GM10248 (cell line): ENCODE measurements at regions of chr12 and their contacts with region 1.

Region 1: GRCh38 chr12:6927379-6928024 is at the start of gene ATN1:
- DNase-seq: peak; percentile 71
- CTCF ChIP-seq: no peak

Region 2: DNA sequence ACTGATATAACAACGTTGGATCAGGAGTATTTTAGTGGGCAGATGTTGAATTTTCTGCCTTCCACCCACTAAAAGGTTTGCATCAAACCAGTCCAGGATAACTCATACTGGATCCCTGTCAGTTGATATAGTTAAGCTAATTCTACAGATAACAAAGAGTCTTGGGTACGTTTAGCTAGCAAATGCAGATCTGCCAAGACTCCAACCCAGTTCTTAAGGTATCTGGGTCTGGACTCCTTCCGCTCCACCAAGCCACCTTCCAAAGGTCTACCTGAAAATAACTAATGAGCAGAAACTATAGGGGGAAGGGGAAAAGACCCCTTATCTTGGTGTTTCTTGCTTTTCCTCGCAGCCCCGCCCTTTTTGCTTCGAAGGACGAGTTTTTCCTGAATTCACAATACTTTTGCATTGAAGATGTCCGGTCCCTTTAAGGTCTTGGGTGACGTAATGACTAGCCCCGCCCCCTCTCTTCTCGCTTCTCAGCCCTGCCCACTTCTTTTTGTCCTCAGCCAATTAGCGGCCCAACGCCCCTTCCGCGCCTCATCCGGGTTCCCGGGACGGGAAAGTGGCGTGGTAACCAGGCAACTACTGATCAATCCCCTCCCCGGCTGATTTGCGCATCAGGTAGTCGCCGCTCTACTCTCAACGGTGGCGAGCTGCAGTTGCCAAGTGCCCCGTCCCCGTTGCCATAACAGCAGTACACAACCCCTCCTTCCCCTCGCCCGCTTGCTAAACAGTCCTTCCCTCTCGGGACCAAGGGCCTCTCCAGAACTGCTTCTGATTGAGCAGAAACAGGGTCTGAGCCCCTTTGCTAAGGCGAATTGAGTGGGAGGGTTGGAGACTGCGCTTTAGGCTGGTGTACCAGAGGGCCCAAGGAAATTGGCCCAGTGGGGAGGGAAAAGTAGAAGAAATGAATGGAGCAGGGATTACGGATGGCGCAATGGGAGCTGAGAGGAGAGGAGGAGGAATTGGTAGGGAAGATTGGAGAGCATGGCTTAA is 22.9 kb before region 1 on chr12 and contains the start of gene LRRC23:
- CTCF ChIA-PET with region 1: interaction called, 35 read pairs
- POLR2A ChIA-PET with region 1: no interaction called
- DNase-seq: peak; percentile 95
- CTCF ChIP-seq: no peak

Region 3: DNA sequence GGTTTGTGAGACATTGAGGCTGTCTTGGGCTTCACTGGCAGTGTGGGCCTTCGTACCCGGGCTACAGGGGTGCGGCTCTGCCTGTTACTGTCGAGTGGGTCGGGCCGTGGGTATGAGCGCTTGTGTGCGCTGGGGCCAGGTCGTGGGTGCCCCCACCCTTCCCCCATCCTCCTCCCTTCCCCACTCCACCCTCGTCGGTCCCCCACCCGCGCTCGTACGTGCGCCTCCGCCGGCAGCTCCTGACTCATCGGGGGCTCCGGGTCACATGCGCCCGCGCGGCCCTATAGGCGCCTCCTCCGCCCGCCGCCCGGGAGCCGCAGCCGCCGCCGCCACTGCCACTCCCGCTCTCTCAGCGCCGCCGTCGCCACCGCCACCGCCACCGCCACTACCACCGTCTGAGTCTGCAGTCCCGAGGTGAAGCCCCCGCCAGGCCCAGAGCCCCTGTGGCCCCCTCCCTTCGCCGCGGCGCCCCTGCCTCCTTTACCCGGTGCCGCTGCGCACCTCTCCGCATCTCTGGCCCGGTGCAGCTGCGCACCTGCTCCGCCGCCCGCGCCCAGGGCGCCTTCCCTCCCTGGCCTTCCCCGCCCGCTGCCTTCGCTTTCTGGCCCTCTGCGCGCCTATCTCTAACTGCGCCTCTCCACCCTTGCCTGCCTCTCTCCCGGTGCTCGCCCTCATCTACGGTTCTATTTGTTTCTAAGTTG is 13.1 kb before region 1 on chr12 and contains the start of gene ENO2:
- CTCF ChIA-PET with region 1: interaction called, 45 read pairs
- POLR2A ChIA-PET with region 1: no interaction called
- DNase-seq: peak; percentile 89
- CTCF ChIP-seq: no peak

Region 4: GRCh38 chr12:6937481-6938297 is 10.2 kb after region 1 on chr12:
- CTCF ChIA-PET with region 1: interaction called, 142 read pairs
- POLR2A ChIA-PET with region 1: interaction called, 6 read pairs
- DNase-seq: peak; percentile 87
- CTCF ChIP-seq: peak; percentile 98

Region 5: DNA sequence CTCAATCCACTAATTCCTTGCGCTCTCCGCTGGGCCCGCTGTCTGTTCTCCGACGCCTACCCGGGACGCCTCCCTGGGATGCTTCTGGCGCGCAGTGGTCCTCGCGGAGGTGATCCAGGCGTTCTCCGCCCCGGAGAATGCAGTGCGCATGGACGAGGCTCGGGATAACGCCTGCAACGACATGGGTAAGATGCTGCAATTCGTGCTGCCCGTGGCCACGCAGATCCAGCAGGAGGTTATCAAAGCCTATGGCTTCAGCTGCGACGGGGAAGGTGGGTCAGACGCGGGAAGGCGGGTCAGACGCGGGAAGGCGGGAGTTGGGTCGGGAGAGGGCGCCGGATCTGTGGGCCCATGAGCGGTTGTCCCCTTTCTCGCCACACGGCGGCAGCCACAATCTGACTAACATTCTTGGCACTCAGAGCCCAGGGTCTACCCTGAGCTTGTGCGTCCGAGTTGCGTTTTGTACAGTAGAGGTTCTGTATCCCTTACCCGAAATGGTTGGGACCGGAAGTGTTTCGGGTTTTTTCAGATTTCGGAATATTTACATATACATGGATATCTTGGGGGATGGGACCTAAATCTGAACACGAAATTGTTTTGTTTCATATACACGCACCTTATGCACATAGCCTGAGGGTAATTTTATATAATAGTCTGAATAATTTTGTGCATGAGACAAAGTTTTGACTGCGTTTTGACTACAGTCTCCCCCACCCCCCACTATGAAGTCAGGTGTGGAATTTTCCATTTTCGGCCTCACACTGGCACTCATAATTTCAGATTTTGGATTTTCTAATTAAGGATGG is 17.1 kb after region 1 on chr12:
- CTCF ChIA-PET with region 1: interaction called, 142 read pairs
- POLR2A ChIA-PET with region 1: interaction called, 10 read pairs
- DNase-seq: peak; percentile 79
- CTCF ChIP-seq: peak; percentile 94

Region 6: GRCh38 chr12:6953442-6954315 is 26.2 kb after region 1 on chr12:
- CTCF ChIA-PET with region 1: interaction called, 530 read pairs
- POLR2A ChIA-PET with region 1: no interaction called
- DNase-seq: peak; percentile 80
- CTCF ChIP-seq: no peak

Region 7: DNA sequence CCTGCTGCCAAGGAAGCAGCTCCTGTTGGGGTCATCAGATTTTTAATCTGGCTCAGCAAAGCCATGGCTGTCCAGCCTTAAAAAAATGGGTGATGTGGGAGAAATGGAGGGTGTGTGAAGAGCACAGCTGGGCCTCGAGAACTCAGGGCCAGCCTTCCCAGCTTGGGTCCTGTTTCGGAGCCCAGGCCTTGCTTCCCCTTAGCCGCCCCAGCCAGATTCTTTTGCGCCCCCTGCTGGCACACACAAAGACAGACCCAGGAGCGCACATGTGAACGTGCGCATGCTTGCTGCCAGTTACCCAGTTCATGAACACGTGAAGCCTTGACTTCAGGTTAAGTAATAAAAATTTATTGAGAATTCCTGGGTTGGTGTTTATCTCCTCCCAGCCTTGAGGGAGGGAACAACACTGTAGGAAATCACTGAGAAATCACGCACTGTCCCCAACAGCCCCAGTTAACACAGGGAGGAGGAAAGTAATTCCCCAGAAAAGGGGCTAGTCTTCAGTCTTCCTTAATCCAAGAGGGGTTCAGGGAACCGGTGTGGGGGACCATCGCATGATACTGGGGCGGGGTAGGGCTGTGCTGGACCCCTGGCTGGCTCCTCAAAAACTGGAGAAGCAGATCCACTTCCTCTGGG is 37.6 kb after region 1 on chr12:
- CTCF ChIA-PET with region 1: interaction called, 530 read pairs
- POLR2A ChIA-PET with region 1: no interaction called
- DNase-seq: peak; percentile 84
- CTCF ChIP-seq: peak; percentile 98

Region 8: GRCh38 chr12:7005311-7005710 is 77.8 kb after region 1 on chr12:
- CTCF ChIA-PET with region 1: no interaction called
- POLR2A ChIA-PET with region 1: no interaction called
- DNase-seq: no peak
- CTCF ChIP-seq: no peak

Region 9: DNA sequence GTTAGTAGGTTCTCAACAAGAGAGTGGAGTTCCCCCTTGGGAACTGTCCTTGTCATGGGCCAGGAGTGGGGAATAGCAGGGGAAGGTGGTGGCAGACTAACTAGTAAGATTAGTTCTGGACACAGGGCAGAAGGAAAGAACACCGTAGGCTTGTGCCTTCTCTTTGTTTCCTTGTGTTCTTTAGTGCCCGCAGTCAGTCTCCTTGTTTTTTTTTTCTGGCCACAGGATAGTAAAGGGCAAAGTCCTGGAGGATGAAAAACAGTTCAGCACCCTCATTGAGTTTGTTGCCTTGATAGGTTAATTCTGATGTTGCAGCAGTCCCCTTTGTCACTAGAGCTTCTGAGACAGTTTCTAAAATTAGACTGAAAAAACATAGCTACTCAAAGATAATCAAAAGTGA is 270.3 kb after region 1 on chr12:
- CTCF ChIA-PET with region 1: no interaction called
- POLR2A ChIA-PET with region 1: no interaction called
- DNase-seq: no peak
- CTCF ChIP-seq: no peak